ENCODE measurements at regions of chr11 and their contacts with region 1.

Region 1: DNA sequence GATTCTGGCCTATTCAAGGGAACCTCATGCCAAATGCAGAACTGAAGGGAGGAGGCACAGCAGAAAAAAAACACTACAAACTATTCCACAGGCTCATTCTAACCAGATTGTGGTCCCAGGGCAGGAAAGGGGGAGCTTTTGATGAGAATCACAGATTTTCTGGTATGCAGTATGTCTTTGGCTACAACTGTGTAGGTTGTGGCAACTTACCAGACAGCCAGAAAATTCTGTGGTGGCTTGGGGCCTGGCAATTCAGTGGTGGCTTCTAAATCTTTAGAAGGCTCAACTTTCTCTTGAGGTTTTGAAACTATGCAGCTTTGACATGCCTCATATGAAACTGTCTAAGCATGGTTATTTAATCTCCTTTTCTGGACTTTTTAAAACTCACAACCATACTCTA is 850.8 kb upstream of the CCDC90B start:
- DNase-seq: no peak
- ATAC-seq: no peak

Region 2: DNA sequence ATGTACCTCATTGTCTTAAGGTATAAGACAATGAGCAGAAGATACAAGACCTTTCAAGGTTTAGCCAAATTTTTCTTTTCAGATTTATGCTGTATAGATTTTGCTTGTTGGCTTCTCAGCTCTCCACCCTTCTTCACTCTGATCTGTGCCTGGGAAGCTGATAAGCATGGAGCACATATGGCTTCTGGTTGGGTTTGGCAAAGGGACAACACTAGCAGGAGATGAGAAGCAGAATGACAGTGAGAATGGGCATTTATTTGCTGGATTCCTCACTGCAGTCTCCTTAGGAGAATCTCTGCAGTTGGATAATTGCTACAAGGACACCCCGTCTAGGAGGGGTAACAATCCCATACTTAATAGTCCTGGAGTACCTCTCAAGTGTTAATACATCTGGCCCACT is 376.0 kb before region 1 on chr11:
- intact Hi-C with region 1: no loop called
- DNase-seq: no peak
- ATAC-seq: no peak

Region 3: GRCh38 chr11:84193706-84194105 is 56.8 kb after region 1 on chr11:
- intact Hi-C with region 1: loop called (anchors 10 kb)
- DNase-seq: no peak
- ATAC-seq: no peak

Region 4: GRCh38 chr11:84740050-84740449 is 603.1 kb after region 1 on chr11:
- intact Hi-C with region 1: no loop called
- DNase-seq: no peak
- ATAC-seq: no peak